ENCODE measurements at regions of chr20 and their contacts with region 1.

Region 1: GRCh38 chr20:38221119-38221589 is 39.4 kb downstream of the KIAA1755 start:
- DNase-seq: peak; percentile 96
- H3K4me3 Mint-ChIP-seq: no peak overlapping the region
- H3K27ac Mint-ChIP-seq: no peak overlapping the region
- H3K4me1 Mint-ChIP-seq: peaks cover 38% of the 10 kb centered on the region
- H3K27me3 Mint-ChIP-seq: no peaks in the 10 kb centered on the region
- CTCF ChIP-seq: peak; percentile 99

Region 2: DNA sequence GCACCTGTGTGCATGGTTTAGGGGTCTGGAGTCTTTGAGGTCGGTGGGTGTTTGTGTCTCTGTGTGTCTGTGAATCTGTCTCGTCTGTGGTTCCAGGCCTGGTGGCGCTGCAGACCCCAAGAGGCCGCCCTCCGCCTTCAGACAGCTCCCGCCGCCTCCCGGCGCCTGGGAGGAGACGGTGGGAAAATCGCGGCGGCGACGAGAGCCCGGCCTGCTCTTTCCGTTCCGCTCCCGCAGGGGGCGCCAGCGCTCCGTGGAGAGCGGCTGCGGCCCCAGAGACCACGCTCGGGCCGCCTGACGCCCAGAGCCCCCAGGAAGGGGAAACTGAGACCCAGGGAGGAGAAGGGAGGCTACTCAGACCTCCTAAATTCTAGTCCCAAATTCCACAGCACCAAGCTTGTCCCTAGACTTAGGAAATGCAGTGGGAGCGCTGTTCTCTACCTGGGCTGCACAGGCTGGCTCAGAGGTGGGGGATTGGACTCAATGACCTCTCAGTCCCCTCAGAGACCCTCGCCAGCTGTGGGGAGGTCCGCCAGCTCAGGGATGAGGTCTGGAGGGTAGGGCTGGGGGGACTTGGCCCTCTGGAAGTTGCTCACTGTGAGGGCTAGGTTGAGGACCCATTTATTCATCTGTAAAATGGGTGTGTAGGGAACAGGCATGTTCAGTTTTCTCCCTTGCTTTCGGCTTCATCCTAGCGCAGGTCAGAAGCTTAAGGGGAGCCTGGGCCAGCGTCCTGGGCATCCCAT is 656.6 kb before region 1 on chr20:
- CTCF ChIA-PET with region 1: interaction called, 3 read pairs
- intact Hi-C with region 1: loop called (anchors 5 kb)
- DNase-seq: peak; percentile 84
- H3K4me3 Mint-ChIP-seq: peak overlapping the region; percentile 14
- H3K27ac Mint-ChIP-seq: no peak overlapping the region
- H3K4me1 Mint-ChIP-seq: peaks cover 7% of the 10 kb centered on the region
- H3K27me3 Mint-ChIP-seq: peaks cover 100% of the 10 kb centered on the region
- CTCF ChIP-seq: peak; percentile 98

Region 3: DNA sequence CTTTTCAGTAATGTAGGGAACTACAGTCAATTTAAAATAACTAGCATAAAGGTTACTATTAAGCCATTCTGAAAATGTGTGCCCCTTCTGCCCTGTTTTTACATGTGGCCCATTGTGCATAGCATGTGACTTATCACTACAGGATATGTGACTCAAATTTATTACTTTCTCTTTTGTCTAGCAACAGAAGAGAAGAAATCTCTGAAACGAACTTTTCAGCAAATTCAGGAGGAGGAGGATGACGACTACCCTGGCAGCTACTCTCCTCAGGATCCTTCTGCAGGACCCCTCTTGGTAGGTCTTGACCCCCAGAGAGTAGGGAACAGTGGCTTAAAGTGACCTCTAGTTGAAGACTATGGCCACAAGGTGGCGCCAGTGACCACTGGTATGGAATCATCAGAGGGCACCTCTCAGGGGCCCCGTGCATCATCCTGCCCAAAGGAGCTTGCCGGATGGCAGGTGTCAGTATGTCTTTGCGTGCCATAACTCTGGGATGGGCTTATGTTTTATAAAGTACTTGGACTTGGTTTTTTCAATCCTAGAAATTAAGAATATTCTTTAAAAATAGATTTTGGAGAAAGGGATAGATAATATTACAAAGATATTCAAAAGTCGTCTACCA is 163.7 kb before region 1 on chr20:
- CTCF ChIA-PET with region 1: interaction called, 65 read pairs
- intact Hi-C with region 1: loop called (anchors 1 kb)
- DNase-seq: peak; percentile 91
- H3K4me3 Mint-ChIP-seq: no peak overlapping the region
- H3K27ac Mint-ChIP-seq: no peak overlapping the region
- H3K4me1 Mint-ChIP-seq: no peaks in the 10 kb centered on the region
- H3K27me3 Mint-ChIP-seq: no peaks in the 10 kb centered on the region
- CTCF ChIP-seq: peak; percentile 97

Region 4: GRCh38 chr20:38113401-38114325 is 107.5 kb before region 1 on chr20:
- CTCF ChIA-PET with region 1: interaction called, 16 read pairs
- intact Hi-C with region 1: loop called (anchors 1 kb)
- DNase-seq: peak; percentile 86
- H3K4me3 Mint-ChIP-seq: no peak overlapping the region
- H3K27ac Mint-ChIP-seq: peak overlapping the region; percentile 17
- H3K4me1 Mint-ChIP-seq: peaks cover 60% of the 10 kb centered on the region
- H3K27me3 Mint-ChIP-seq: no peaks in the 10 kb centered on the region
- CTCF ChIP-seq: peak; percentile 58

Region 5: GRCh38 chr20:38173237-38174156 is 47.7 kb before region 1 on chr20:
- CTCF ChIA-PET with region 1: interaction called, 46 read pairs
- intact Hi-C with region 1: loop called (anchors 1 kb)
- DNase-seq: peak; percentile 93
- H3K4me3 Mint-ChIP-seq: peak overlapping the region; percentile 6
- H3K27ac Mint-ChIP-seq: peak overlapping the region; percentile 86
- H3K4me1 Mint-ChIP-seq: peaks cover 59% of the 10 kb centered on the region
- H3K27me3 Mint-ChIP-seq: no peaks in the 10 kb centered on the region
- CTCF ChIP-seq: no peak

Region 6: GRCh38 chr20:38426006-38426405 is 204.9 kb after region 1 on chr20:
- CTCF ChIA-PET with region 1: no interaction called
- intact Hi-C with region 1: no loop called
- DNase-seq: no peak
- H3K4me3 Mint-ChIP-seq: no peak overlapping the region
- H3K27ac Mint-ChIP-seq: no peak overlapping the region
- H3K4me1 Mint-ChIP-seq: peaks cover 44% of the 10 kb centered on the region
- H3K27me3 Mint-ChIP-seq: no peaks in the 10 kb centered on the region
- CTCF ChIP-seq: no peak

Region 7: GRCh38 chr20:38559764-38560163 is 338.6 kb after region 1 on chr20:
- CTCF ChIA-PET with region 1: no interaction called
- intact Hi-C with region 1: no loop called
- DNase-seq: no peak
- H3K4me3 Mint-ChIP-seq: no peak overlapping the region
- H3K27ac Mint-ChIP-seq: no peak overlapping the region
- H3K4me1 Mint-ChIP-seq: no peaks in the 10 kb centered on the region
- H3K27me3 Mint-ChIP-seq: no peaks in the 10 kb centered on the region
- CTCF ChIP-seq: no peak

Region 8: GRCh38 chr20:38875175-38875993 is 654.2 kb after region 1 on chr20:
- CTCF ChIA-PET with region 1: no interaction called
- intact Hi-C with region 1: no loop called
- DNase-seq: no peak
- H3K4me3 Mint-ChIP-seq: no peak overlapping the region
- H3K27ac Mint-ChIP-seq: no peak overlapping the region
- H3K4me1 Mint-ChIP-seq: peaks cover 22% of the 10 kb centered on the region
- H3K27me3 Mint-ChIP-seq: peaks cover 28% of the 10 kb centered on the region
- CTCF ChIP-seq: no peak